Testis (tissue), 5 donors: ENCODE measurements at regions of chr20 and their contacts with region 1.

Region 1: GRCh38 chr20:32207626-32208498 is at the starts of genes PLAGL2 and POFUT1:
- DNase-seq: peak; percentile 93
- H3K4me3 ChIP-seq: peak within 1 kb of the TSS; percentile 86 to 95
- H3K27ac ChIP-seq: peak within 1 kb of the TSS; percentile 91
- H3K4me1 ChIP-seq: peaks cover 53% of the 10 kb centered on the region
- H3K27me3 ChIP-seq: no peaks in the 10 kb centered on the region
- CTCF ChIP-seq: peak in 1 of 3 experiments; percentile 8
- POLR2A ChIP-seq: no peak
- total RNA-seq, gene PLAGL2: 30.5 to 36.8 TPM
- total RNA-seq, gene POFUT1: 46.6 to 54.2 TPM

Region 2: GRCh38 chr20:32091888-32092346 is 115.9 kb before region 1 on chr20:
- intact Hi-C with region 1: no loop called
- DNase-seq: peak; percentile 91
- H3K4me3 ChIP-seq: no peak overlapping the region
- H3K27ac ChIP-seq: no peak overlapping the region
- H3K4me1 ChIP-seq: no peaks in the 10 kb centered on the region
- H3K27me3 ChIP-seq: no peaks in the 10 kb centered on the region
- CTCF ChIP-seq: peak; percentile 19 to 92 (median 76)
- POLR2A ChIP-seq: no peak

Region 3: DNA sequence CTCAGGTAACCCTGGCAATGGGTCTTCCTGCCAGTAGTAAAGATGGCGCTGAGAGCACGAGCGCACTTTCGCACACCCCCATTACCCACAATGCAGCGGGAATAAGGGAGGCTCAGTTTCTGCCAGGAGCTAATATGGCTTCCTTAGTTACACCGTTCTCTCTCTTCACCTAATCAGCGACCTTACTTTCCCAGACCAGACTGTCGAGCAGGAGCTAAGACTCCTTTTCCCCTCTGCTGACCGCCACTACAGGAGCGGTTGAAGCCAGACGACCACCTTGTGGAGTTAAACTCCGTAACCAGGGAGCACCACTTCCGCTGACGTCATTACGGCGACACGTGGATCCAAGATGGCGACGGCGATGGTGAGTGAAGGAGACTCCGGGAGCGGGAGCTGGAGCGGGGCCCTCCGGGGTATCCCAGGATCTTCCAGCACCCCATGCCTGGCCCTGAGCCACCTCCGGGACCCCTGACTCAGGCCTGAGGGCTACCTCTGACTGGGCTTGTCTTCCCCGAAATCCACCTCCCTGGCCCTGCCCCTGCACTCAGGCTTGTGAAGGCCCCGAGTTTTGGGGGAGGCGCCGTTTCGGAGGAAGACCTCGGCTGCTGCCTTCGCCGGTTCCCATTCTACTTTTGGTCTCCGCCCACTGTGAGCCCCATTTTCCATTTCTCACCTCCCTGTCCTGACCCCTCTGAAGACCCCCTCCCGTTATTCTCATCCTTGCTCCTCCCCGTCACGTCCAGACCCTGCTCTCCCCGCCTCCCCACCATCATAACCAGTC is 98.3 kb before region 1 on chr20 and contains the start of gene TM9SF4:
- intact Hi-C with region 1: loop called (anchors 5 kb)
- DNase-seq: peak; percentile 95
- H3K4me3 ChIP-seq: peak within 1 kb of the TSS; percentile 90 to 97
- H3K27ac ChIP-seq: peak within 1 kb of the TSS; percentile 96 to 99
- H3K4me1 ChIP-seq: peaks cover 12% of the 10 kb centered on the region
- H3K27me3 ChIP-seq: no peaks in the 10 kb centered on the region
- CTCF ChIP-seq: no peak
- POLR2A ChIP-seq: no peak
- total RNA-seq, gene TM9SF4: 54.3 to 55.8 TPM